CD4-positive, alpha-beta memory T cell (primary cell): ENCODE measurements at regions of chr9 and their contacts with region 1.

Region 1: DNA sequence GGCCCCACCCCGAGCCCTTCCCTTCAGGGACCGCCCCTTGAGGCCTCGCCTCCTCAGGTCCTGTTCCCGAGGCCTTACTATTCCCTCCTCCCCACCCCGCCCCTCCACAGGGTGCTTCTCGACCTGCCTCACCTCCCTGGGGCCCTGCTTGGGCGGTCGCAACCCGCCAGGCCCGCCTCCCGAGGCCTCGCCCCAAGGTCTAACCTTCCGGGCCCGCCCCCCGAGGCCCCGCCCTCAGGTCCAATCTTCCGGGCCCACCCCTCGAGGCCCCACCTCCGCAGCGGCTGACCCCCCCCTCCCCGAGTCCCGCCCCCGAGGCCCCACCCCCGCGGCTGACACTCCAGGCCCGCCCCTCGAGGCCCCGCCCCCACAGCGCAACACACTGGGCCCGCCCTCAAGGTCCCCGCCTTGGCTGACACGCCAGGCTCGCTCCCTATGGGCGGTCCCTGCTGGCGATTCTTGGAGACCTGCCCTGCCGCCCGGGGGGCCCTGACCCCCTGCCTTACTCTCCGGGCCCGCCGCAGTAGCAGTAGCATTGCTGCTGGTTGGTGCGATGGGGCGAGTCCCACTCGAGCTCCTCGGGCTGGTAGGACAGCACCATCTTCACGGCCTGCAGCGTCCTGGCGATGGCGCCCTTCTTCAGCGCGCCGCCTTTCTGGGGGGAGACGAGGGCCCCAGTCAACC is 8.2 kb downstream of the PHF19 start:
- DNase-seq: peak; percentile 94 to 98 (median 96)
- H3K4me3 ChIP-seq: peak overlapping the region in 1 of 2 donors; percentile 50
- H3K4me3 Mint-ChIP-seq: peak overlapping the region; percentile 91 to 96 (median 94)
- H3K27ac ChIP-seq: peak overlapping the region; percentile 79
- H3K27ac Mint-ChIP-seq: peak overlapping the region; percentile 89 to 99 (median 98)
- H3K4me1 ChIP-seq: peaks cover 35% of the 10 kb centered on the region
- H3K4me1 Mint-ChIP-seq: peaks cover 25 to 44% (median 29%) of the 10 kb centered on the region in 4 donors
- H3K27me3 ChIP-seq: no peaks in the 10 kb centered on the region
- H3K27me3 Mint-ChIP-seq: no peaks in the 10 kb centered on the region

Region 2: DNA sequence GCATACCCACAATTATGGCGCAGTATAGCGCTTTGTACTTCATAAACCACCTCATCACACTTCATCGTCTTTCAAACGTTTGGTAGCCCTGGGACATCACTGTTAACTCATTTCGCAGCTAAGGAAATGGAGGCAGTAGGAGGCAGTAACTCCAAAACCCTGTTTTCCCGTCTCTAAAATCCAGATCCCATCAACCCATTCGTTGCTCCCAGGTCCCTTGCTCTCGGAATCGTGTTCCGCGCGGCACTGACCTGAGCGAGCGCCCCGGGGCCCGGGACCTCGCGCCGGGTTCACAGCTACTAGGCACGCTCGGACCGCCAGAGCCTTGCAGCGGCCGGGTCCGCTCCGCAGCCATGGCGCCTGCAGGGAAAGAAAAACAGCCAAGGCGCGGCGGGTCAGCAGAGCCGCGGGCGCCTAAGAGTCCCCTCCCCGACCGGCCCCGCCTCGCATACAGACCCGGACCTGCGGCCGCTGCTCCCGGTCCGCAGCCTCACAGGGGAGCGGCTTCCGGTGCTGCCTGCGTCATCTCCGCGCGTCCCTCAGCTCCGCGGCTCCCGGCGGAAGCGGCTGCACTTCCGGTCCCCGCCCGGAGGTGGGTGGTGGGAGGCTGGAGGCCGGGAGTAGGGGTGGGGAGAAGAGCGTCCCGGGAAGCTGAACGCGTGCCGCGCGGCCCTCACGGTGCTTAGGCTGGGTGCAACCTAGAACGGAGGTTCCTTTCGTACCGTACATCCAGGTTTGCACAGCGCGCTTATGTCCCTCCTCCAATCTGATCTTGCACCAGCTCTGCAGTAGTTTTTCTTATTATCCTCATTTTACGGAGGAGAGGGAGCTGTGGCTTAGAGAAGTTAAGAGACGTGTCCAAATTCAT is 75.7 kb before region 1 on chr9 and contains the start of gene FBXW2:
- CTCF ChIA-PET with region 1: no interaction called
- POLR2A ChIA-PET with region 1: interaction called, 20 read pairs
- intact Hi-C with region 1: loop called (anchors 1 kb)
- DNase-seq: peak; percentile 74 to 83 (median 78)
- H3K4me3 ChIP-seq: peak within 1 kb of the TSS; percentile 82 to 94
- H3K4me3 Mint-ChIP-seq: peak within 1 kb of the TSS; percentile 89 to 98 (median 92)
- H3K27ac ChIP-seq: peak within 1 kb of the TSS; percentile 77
- H3K27ac Mint-ChIP-seq: peak within 1 kb of the TSS; percentile 90 to 97 (median 93)
- H3K4me1 ChIP-seq: peaks cover 58% of the 10 kb centered on the region
- H3K4me1 Mint-ChIP-seq: peaks cover 39 to 62% (median 50%) of the 10 kb centered on the region in 4 donors
- H3K27me3 ChIP-seq: no peaks in the 10 kb centered on the region
- H3K27me3 Mint-ChIP-seq: no peaks in the 10 kb centered on the region
- total RNA-seq, gene FBXW2: 73.7 to 77.8 TPM

Region 3: DNA sequence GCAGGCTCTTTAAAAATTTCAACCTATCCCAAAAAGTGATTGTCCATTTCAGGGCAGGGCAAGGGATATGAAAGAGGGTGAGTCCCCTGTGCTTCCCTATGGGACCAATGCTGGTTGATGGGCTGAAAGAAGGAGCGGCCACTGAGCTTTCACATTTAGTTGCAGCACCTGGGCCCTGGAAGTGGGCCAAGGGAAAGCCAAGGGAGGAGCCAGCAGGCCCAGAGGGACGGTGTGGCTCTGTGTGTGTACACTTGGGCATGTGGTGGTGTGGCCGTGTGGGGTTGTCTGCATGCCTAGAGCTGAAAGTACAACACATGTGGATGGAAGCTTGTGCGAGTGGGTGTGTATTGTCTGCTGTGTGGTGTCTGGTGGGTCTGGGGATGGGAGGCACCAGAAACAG is 12.1 kb before region 1 on chr9:
- CTCF ChIA-PET with region 1: interaction called, 5 read pairs
- POLR2A ChIA-PET with region 1: interaction called, 19 read pairs
- intact Hi-C with region 1: no loop called
- DNase-seq: no peak
- H3K4me3 ChIP-seq: no peak overlapping the region
- H3K4me3 Mint-ChIP-seq: no peak overlapping the region
- H3K27ac ChIP-seq: no peak overlapping the region
- H3K27ac Mint-ChIP-seq: peak overlapping the region in 4 of 7 donors; percentile 8 to 83 (median 40)
- H3K4me1 ChIP-seq: no peaks in the 10 kb centered on the region
- H3K4me1 Mint-ChIP-seq: peaks cover 0 to 3% (median under 1%) of the 10 kb centered on the region in 4 donors
- H3K27me3 ChIP-seq: no peaks in the 10 kb centered on the region
- H3K27me3 Mint-ChIP-seq: no peaks in the 10 kb centered on the region

Region 4: DNA sequence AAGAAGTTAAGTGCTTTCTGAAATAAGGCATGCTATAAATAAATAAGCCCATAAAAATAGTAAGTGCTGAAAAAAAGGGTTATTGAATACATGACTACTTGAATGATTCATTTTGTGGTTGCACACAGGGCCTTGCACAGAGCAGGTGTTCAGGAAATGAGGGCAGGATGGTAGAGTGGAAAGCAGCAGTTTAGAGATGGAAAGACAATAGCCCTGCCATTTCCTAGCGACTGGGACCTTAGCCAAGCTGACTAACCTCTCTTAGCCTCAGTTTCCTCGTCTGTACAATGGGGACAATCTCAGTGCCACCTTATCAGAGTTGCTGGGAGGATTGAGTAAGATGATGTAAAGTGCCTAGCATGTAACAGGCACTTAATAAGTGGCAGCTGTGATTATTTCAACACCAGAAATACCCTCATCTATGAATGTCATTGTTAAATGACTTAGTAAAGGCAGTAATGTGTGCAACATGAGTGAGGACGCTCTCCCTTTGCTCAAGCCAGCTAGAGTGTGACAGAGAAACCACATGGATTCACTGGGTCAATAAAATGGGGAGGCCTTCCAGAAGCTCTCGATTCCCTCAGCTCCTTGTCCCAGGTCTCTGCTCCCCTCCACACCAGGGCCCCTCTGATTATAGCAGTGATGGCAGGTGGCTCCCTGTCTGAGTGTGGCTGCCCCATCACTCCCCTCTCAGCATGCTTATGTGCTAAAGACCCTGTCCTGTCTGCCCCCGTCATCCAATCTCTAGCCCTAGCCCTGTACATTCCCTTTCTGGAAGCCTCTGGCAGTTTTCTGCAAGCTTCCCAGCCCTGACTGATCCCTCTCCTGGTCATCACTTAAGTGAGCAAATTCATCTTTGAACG is 24.2 kb after region 1 on chr9:
- CTCF ChIA-PET with region 1: interaction called, 32 read pairs
- POLR2A ChIA-PET with region 1: interaction called, 5,577 read pairs
- intact Hi-C with region 1: loop called (anchors 1 kb)
- DNase-seq: peak; percentile 69 to 93 (median 75)
- H3K4me3 ChIP-seq: peak overlapping the region in 1 of 2 donors; percentile 41
- H3K4me3 Mint-ChIP-seq: peak overlapping the region; percentile 8 to 82 (median 68)
- H3K27ac ChIP-seq: peak overlapping the region; percentile 76
- H3K27ac Mint-ChIP-seq: peak overlapping the region; percentile 86 to 100 (median 98)
- H3K4me1 ChIP-seq: peaks cover 95% of the 10 kb centered on the region
- H3K4me1 Mint-ChIP-seq: peaks cover 49 to 92% (median 71%) of the 10 kb centered on the region in 4 donors
- H3K27me3 ChIP-seq: no peaks in the 10 kb centered on the region
- H3K27me3 Mint-ChIP-seq: no peaks in the 10 kb centered on the region

Region 5: DNA sequence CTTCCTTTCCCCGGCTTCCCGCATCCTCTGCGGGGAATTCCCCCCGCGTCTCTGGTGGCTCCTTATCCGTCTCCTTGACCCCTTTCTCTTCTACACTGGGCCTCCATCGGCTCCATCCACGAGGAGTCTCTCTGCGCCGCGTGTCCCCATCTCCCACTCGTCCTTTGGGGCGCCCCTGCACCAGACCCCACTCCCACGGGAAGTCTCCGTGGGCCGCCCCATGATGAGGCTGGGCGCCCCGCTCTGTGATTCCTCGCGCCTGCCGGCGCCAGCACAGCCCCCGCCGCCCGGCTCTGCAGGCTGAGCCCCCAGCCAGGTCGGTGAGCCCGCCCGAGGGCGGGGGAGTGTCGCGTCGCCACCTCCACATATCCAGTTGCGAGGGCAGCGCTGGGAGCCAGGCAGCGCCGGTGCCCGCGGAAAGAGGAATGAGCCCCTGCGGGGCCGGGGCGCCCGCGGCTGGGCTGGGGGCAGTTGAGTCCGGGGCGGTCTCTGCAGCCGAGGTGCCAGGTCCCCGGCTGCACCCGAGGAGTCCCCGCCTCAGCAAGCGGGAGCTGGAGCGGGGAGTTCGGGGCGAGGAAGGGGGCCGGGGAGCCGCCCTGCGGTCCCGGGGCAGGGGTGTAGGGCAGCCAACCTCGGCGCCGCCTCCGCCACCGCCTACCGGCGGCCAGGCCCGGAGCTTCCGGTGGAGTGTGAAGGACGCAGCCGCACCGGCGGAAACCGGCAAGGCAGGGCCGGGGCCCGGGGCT is 59.8 kb after region 1 on chr9:
- CTCF ChIA-PET with region 1: interaction called, 254 read pairs
- POLR2A ChIA-PET with region 1: interaction called, 5,577 read pairs
- intact Hi-C with region 1: loop called (anchors 1 kb)
- DNase-seq: peak; percentile 75 to 82 (median 79)
- H3K4me3 ChIP-seq: peak overlapping the region; percentile 77 to 88
- H3K4me3 Mint-ChIP-seq: peak overlapping the region; percentile 83 to 97 (median 95)
- H3K27ac ChIP-seq: peak overlapping the region; percentile 99
- H3K27ac Mint-ChIP-seq: peak overlapping the region; percentile 91 to 99 (median 98)
- H3K4me1 ChIP-seq: peaks cover 84% of the 10 kb centered on the region
- H3K4me1 Mint-ChIP-seq: peaks cover 52 to 92% (median 69%) of the 10 kb centered on the region in 4 donors
- H3K27me3 ChIP-seq: no peaks in the 10 kb centered on the region
- H3K27me3 Mint-ChIP-seq: no peaks in the 10 kb centered on the region

Region 6: GRCh38 chr9:120950421-120951388 is 81.9 kb after region 1 on chr9:
- CTCF ChIA-PET with region 1: no interaction called
- POLR2A ChIA-PET with region 1: no interaction called
- intact Hi-C with region 1: no loop called
- DNase-seq: no peak
- H3K4me3 ChIP-seq: no peak overlapping the region
- H3K4me3 Mint-ChIP-seq: no peak overlapping the region
- H3K27ac ChIP-seq: no peak overlapping the region
- H3K27ac Mint-ChIP-seq: peak overlapping the region in 1 of 7 donors; percentile 26
- H3K4me1 ChIP-seq: no peaks in the 10 kb centered on the region
- H3K4me1 Mint-ChIP-seq: no peaks in the 10 kb centered on the region
- H3K27me3 ChIP-seq: no peaks in the 10 kb centered on the region
- H3K27me3 Mint-ChIP-seq: no peaks in the 10 kb centered on the region

Region 7: GRCh38 chr9:120985810-120986222 is 117.0 kb after region 1 on chr9:
- CTCF ChIA-PET with region 1: interaction called, 11 read pairs
- POLR2A ChIA-PET with region 1: no interaction called
- intact Hi-C with region 1: no loop called
- DNase-seq: no peak
- H3K4me3 ChIP-seq: no peak overlapping the region
- H3K4me3 Mint-ChIP-seq: no peak overlapping the region
- H3K27ac ChIP-seq: no peak overlapping the region
- H3K27ac Mint-ChIP-seq: no peak overlapping the region
- H3K4me1 ChIP-seq: no peaks in the 10 kb centered on the region
- H3K4me1 Mint-ChIP-seq: peaks cover 0 to 5% (median 2%) of the 10 kb centered on the region in 4 donors
- H3K27me3 ChIP-seq: no peaks in the 10 kb centered on the region
- H3K27me3 Mint-ChIP-seq: peaks cover 0 to 2% of the 10 kb centered on the region in 2 donors

Region 8: GRCh38 chr9:121074635-121075385 is 206.0 kb after region 1 on chr9 and contains the start of gene CNTRL:
- CTCF ChIA-PET with region 1: interaction called, 22 read pairs
- POLR2A ChIA-PET with region 1: interaction called, 4 read pairs
- intact Hi-C with region 1: no loop called
- DNase-seq: peak; percentile 81 to 92 (median 84)
- H3K4me3 ChIP-seq: peak within 1 kb of the TSS; percentile 72 to 87
- H3K4me3 Mint-ChIP-seq: peak within 1 kb of the TSS; percentile 82 to 100 (median 98)
- H3K27ac ChIP-seq: peak within 1 kb of the TSS; percentile 90
- H3K27ac Mint-ChIP-seq: peak within 1 kb of the TSS; percentile 78 to 99 (median 98)
- H3K4me1 ChIP-seq: peaks cover 37% of the 10 kb centered on the region
- H3K4me1 Mint-ChIP-seq: peaks cover 34 to 66% (median 53%) of the 10 kb centered on the region in 4 donors
- H3K27me3 ChIP-seq: no peaks in the 10 kb centered on the region
- H3K27me3 Mint-ChIP-seq: no peaks in the 10 kb centered on the region
- total RNA-seq, gene CNTRL: 119 to 122 TPM